T-cell (primary cell): ENCODE measurements at regions of chr13 and their contacts with region 1.

Region 1: GRCh38 chr13:49606747-49607648 is 21.3 kb upstream of the ARL11 start:
- DNase-seq: peak; percentile 59 to 86 (median 75)
- ATAC-seq: peak; percentile 97 to 100 (median 98)
- H3K4me3 ChIP-seq: peak overlapping the region; percentile 32 to 35
- H3K4me3 Mint-ChIP-seq: peak overlapping the region; percentile 74 to 81 (median 77)
- H3K27ac ChIP-seq: no peak overlapping the region
- H3K27ac Mint-ChIP-seq: peak overlapping the region; percentile 76 to 82
- H3K4me1 ChIP-seq: peaks cover 0 to 7% of the 10 kb centered on the region in 2 experiments
- H3K4me1 Mint-ChIP-seq: peaks cover 4 to 9% (median 6%) of the 10 kb centered on the region in 3 donors
- H3K27me3 ChIP-seq: no peaks in the 10 kb centered on the region
- H3K27me3 Mint-ChIP-seq: no peaks in the 10 kb centered on the region

Region 2: GRCh38 chr13:49495783-49496762 is 110.9 kb before region 1 on chr13 and contains the start of gene PHF11:
- CTCF ChIA-PET with region 1: no interaction called
- POLR2A ChIA-PET with region 1: interaction called in 1 of 2 experiments, 14 read pairs
- DNase-seq: peak; percentile 66 to 92 (median 83)
- ATAC-seq: peak; percentile 84 to 89 (median 87)
- H3K4me3 ChIP-seq: peak within 1 kb of the TSS; percentile 79 to 95
- H3K4me3 Mint-ChIP-seq: peak within 1 kb of the TSS; percentile 95 to 98 (median 98)
- H3K27ac ChIP-seq: peak within 1 kb of the TSS; percentile 95
- H3K27ac Mint-ChIP-seq: peak within 1 kb of the TSS; percentile 100
- H3K4me1 ChIP-seq: peaks cover 6 to 38% of the 10 kb centered on the region in 2 experiments
- H3K4me1 Mint-ChIP-seq: peaks cover 53 to 57% (median 56%) of the 10 kb centered on the region in 3 donors
- H3K27me3 ChIP-seq: no peaks in the 10 kb centered on the region
- H3K27me3 Mint-ChIP-seq: no peaks in the 10 kb centered on the region
- total RNA-seq, gene PHF11: 94.0 to 119 (median 113) TPM

Region 3: DNA sequence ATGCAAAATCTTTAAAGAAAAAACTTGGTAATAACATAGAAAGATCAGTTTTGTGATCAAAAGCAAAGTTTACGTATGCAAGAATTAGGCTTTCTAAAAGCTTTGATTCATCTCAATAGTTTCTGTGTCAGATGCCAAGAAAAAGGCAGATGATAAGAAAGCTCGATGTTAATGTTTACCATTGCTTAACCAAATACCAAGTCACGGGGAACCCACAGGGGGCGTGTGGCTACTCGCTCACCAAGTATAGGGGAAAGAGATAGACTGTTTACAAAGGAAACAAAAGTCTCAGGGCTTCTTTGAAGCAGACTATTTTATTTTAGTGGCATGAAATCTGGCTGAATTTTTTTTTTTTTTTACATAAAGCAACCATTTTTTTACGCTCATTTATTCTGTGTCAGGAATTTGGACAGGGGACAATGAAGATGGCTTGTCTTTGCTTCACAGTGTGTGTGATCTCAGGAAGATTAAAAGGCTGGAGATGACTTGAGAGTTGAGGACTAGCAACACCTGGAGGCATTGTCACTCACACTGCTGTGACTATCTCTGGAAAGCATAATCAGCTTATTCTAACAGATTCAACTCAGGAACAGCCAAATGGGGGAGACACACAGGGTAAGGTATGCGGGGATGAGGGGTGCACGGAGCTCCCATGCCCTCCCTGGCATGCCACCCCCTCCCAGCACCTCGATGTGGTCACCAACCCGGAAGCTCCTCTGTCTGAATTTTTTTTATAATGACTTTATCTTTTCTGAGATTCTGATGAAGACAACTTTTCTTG is 46.5 kb before region 1 on chr13:
- CTCF ChIA-PET with region 1: no interaction called
- POLR2A ChIA-PET with region 1: no interaction called
- DNase-seq: peak in 13 of 35 experiments; percentile 5 to 31 (median 14)
- ATAC-seq: peak in 2 of 4 experiments; percentile 37 to 55
- H3K4me3 ChIP-seq: no peak overlapping the region
- H3K4me3 Mint-ChIP-seq: no peak overlapping the region
- H3K27ac ChIP-seq: no peak overlapping the region
- H3K27ac Mint-ChIP-seq: no peak overlapping the region
- H3K4me1 ChIP-seq: no peaks in the 10 kb centered on the region
- H3K4me1 Mint-ChIP-seq: peaks cover 4 to 11% (median 11%) of the 10 kb centered on the region in 3 donors
- H3K27me3 ChIP-seq: no peaks in the 10 kb centered on the region
- H3K27me3 Mint-ChIP-seq: no peaks in the 10 kb centered on the region

Region 4: DNA sequence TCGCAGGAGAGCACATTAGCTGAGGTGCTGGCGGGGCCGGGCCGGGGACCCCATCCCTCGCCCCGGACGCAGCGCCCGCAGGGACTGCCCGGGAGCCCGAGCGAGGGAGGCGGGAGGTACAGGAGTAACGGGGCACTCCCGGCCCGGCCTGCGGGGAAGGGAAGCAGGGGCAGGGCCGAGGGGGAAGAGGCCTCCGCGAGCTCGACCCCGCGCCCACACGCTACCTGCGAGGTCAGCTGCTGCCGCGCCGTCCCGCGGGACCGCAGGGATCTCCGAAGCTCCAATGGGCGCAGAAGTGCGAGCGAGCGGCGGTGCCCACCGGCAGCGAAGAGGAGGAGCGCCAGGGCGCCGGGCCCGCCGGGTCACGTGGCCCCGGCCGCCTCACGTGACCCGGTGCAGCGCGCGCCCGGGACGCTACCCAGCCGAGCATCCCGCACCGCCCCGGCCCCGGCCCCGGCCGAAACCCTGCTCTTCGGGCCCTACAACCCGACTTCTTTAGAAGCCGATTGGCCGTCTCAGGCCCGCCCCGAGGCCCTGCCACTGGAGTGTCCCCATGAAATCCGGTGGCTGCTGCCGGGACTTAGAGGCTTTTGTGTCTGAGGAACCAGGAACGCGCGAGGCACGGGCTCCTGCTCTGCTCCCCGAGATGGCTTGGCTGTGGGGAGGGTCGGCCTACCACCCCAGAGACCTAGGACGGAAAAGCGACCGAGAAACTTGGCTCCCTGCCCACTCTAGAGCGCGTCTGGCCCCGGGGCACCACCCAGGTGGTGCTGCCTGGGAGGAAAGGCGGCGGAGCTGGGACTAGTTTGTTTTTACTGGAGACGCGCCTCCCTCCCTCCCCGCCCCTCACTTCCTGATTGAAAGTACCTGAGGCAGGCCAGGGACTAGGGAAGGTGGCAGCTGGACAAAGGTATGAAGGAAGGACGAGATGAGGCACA is 21.5 kb before region 1 on chr13 and contains the start of gene RCBTB1:
- CTCF ChIA-PET with region 1: interaction called in 1 of 2 experiments, 10 read pairs
- POLR2A ChIA-PET with region 1: no interaction called
- DNase-seq: peak; percentile 38 to 85 (median 59)
- ATAC-seq: peak; percentile 96 to 97 (median 96)
- H3K4me3 ChIP-seq: peak within 1 kb of the TSS; percentile 79 to 89
- H3K4me3 Mint-ChIP-seq: peak within 1 kb of the TSS; percentile 80 to 90 (median 84)
- H3K27ac ChIP-seq: peak within 1 kb of the TSS; percentile 74
- H3K27ac Mint-ChIP-seq: peak within 1 kb of the TSS; percentile 74 to 85
- H3K4me1 ChIP-seq: peaks cover 3 to 11% of the 10 kb centered on the region in 2 experiments
- H3K4me1 Mint-ChIP-seq: peaks cover 25 to 46% (median 45%) of the 10 kb centered on the region in 3 donors
- H3K27me3 ChIP-seq: no peaks in the 10 kb centered on the region
- H3K27me3 Mint-ChIP-seq: no peaks in the 10 kb centered on the region
- total RNA-seq, gene RCBTB1: 15.9 to 23.9 (median 18.9) TPM

Region 5: DNA sequence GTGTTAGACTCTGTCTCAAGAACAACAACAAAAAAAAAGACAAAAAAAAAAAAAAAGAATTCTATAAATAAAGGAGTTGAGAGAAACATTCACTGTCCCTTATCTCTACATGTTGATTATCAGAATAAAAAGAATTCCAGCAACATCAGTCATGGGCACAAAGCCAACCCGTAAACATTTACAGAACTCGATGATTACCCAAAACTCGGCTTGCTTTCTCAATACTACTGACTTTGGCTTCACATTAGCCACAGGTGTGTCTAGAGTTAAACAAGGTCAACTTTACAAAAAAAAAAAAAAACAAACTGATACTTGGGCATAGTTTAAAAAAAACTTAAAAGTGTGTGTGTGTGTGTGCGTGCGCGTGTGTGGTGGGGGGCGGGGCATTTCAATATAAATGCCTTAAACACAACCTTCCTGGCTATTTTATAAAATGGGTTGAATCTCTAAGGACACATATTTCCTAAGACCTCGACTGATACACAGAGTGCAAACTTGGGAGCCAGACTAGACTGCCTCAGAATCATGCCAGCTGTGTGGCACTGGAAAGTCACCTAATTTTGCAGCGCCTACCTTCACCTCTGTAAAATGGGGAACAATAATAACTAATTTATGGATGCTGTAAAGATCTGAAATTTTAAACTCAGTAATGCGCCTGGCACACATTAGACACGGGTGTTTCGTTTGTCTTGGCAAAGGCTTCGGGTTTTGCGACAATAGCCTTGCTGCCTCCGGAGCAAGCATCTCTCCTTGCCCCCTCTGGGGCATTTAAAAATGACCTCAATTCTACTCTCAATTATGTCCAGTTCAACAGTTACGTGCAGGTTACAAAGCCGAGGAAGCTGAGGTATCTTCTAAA is 83.4 kb after region 1 on chr13:
- CTCF ChIA-PET with region 1: interaction called in 1 of 2 experiments, 11 read pairs
- POLR2A ChIA-PET with region 1: no interaction called
- DNase-seq: peak in 2 of 35 experiments; percentile 4 to 6
- ATAC-seq: peak in 2 of 4 experiments; percentile 1 to 2
- H3K4me3 ChIP-seq: peak overlapping the region; percentile 75 to 88
- H3K4me3 Mint-ChIP-seq: peak overlapping the region; percentile 81 to 87 (median 86)
- H3K27ac ChIP-seq: no peak overlapping the region
- H3K27ac Mint-ChIP-seq: peak overlapping the region; percentile 50 to 82
- H3K4me1 ChIP-seq: peaks cover 6 to 17% of the 10 kb centered on the region in 2 experiments
- H3K4me1 Mint-ChIP-seq: peaks cover 28 to 50% (median 34%) of the 10 kb centered on the region in 3 donors
- H3K27me3 ChIP-seq: no peaks in the 10 kb centered on the region
- H3K27me3 Mint-ChIP-seq: no peaks in the 10 kb centered on the region

Region 6: DNA sequence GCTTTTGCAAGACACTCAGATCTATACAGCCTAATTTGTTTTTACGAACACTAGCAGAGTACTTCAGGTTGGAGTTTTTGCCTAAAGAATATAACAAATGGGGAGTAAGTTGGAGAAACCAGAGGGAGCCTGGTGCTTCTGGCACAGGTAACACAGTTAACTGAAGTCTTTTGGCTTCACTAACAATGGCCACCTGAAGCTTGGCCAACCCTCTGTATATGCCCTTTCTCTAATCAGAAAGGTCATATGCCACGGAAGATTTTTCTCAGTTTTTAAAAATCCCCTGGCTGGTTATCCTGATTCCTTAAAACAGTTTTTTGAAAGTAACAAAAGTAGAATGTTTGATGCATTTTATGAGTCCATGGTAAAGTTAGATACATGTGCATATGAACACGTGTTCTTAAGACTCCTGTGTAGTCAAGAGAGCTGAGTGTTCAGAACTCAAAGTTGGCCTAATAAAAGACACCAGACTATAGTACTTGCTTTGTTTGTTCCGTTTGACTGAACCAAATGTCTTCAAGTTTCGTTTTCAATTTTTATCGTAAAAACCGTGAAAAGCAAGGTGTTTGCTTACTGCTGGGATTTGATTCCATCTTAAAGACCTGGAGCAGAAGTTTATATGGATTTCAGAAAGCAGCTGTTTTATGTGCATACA is 545.8 kb after region 1 on chr13:
- CTCF ChIA-PET with region 1: no interaction called
- POLR2A ChIA-PET with region 1: no interaction called
- DNase-seq: no peak
- ATAC-seq: no peak
- H3K4me3 ChIP-seq: peak overlapping the region in 1 of 2 donors; percentile 23
- H3K4me3 Mint-ChIP-seq: peak overlapping the region; percentile 56 to 75 (median 56)
- H3K27ac ChIP-seq: no peak overlapping the region
- H3K27ac Mint-ChIP-seq: peak overlapping the region; percentile 62 to 74
- H3K4me1 ChIP-seq: no peaks in the 10 kb centered on the region
- H3K4me1 Mint-ChIP-seq: peaks cover 20 to 26% (median 23%) of the 10 kb centered on the region in 3 donors
- H3K27me3 ChIP-seq: no peaks in the 10 kb centered on the region
- H3K27me3 Mint-ChIP-seq: no peaks in the 10 kb centered on the region